K562 (cell line): ENCODE measurements at regions of chr3 and their contacts with region 1.

Region 1: DNA sequence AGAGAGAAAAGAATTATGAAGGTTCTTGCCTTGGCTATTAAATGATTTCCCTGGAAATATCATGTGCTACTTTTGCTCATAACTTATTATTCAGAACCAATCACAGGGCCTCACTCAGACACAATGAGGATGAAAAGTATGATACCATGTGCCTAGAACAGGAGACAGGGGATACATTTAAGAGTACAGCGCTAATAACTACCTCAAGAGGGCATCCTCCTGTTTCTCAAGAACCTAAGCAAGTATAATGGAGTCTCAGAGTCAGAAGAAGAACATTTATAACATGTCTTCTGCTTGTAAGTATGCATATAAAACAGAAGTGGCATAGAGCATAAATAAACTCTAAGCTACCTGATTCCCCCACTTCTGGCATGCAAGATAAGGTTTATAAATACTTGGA is 125.4 kb upstream of the MME start:
- DNase-seq: peak; percentile 17 to 48 (median 30)
- ATAC-seq: peak; percentile 91
- H3K4me3 ChIP-seq: no peak overlapping the region
- H3K27ac ChIP-seq: no peak overlapping the region
- H3K4me1 ChIP-seq: no peaks in the 10 kb centered on the region
- H3K27me3 ChIP-seq: no peaks in the 10 kb centered on the region
- CTCF ChIP-seq: peak; percentile 39 to 58 (median 45); a peak in 4 of 6 replicates
- EP300 ChIP-seq: no peak
- POLR2A ChIP-seq: no peak
- RAD21 ChIP-seq: peak; percentile 61 to 81

Region 2: DNA sequence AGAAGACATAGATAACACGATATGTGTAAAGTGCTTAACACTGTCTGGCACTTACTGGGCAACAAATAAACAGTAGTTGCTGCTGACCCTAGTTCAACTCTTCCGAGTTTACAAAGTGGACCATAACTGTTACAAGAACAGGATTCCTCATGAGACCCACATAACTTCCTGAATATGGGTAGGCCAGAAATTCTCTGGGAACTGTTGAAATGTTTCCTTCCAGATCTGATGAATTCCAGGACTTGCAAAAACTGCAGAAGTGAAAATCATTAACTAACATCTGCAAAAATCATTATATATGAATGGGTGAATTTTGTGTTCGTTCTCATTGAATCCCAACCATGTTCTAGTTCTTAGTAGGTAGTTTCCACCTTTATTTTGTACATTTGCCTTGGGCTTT is 56.3 kb before region 1 on chr3:
- CTCF ChIA-PET with region 1: no interaction called
- POLR2A ChIA-PET with region 1: no interaction called
- in situ Hi-C with region 1: no loop called
- intact Hi-C with region 1: no loop called
- DNase-seq: no peak
- ATAC-seq: no peak
- H3K4me3 ChIP-seq: no peak overlapping the region
- H3K27ac ChIP-seq: no peak overlapping the region
- H3K4me1 ChIP-seq: no peaks in the 10 kb centered on the region
- H3K27me3 ChIP-seq: no peaks in the 10 kb centered on the region
- CTCF ChIP-seq: no peak
- EP300 ChIP-seq: no peak
- POLR2A ChIP-seq: no peak
- RAD21 ChIP-seq: no peak

Region 3: GRCh38 chr3:154986727-154987126 is 32.0 kb after region 1 on chr3:
- CTCF ChIA-PET with region 1: no interaction called
- POLR2A ChIA-PET with region 1: no interaction called
- in situ Hi-C with region 1: no loop called
- intact Hi-C with region 1: no loop called
- DNase-seq: no peak
- ATAC-seq: no peak
- H3K4me3 ChIP-seq: no peak overlapping the region
- H3K27ac ChIP-seq: no peak overlapping the region
- H3K4me1 ChIP-seq: no peaks in the 10 kb centered on the region
- H3K27me3 ChIP-seq: no peaks in the 10 kb centered on the region
- CTCF ChIP-seq: no peak
- EP300 ChIP-seq: no peak
- POLR2A ChIP-seq: no peak
- RAD21 ChIP-seq: no peak

Region 4: DNA sequence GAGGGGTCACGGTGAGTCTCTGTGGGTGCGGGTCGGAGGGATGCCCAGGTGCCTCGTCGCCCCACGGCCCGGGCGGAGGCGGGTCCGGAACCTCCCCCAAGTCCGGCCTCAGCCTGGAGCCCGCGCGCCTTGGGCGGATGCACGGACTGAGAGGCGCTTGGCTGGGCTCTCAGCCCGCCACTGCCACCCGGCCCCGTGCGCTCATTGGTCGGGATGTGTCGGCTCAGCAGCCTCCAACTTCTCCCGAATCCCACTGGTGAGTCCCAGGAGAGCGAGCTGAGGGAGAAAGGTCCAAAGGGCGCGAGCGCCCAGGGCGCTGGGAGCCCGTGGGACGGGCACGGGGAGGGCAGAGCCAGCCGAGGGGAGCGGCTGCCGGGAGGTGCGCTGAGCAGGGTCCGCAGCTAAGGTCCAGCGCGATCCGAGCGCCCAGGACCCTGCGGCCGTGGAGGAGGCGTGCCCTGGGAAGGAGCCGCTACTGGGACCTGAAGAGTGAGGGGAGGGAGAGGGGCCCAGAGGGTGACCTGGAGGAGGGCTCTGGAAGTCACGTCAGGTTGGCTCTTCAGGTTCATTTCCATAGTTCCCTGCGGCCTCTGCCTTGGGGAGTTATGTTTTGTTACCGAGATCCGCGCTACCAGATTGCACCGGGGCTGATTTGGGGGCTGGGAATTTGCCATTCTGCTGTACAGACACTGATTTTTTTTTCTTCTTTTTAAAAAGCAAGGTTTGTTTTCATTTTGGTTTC is 125.2 kb after region 1 on chr3 and contains the start of gene MME:
- CTCF ChIA-PET with region 1: no interaction called
- POLR2A ChIA-PET with region 1: no interaction called
- in situ Hi-C with region 1: no loop called
- intact Hi-C with region 1: loop called (anchors 5 kb)
- DNase-seq: peak; percentile 15 to 23 (median 20)
- ATAC-seq: peak; percentile 81
- H3K4me3 ChIP-seq: peak within 1 kb of the TSS; percentile 58
- H3K27ac ChIP-seq: no peak within 1 kb of the TSS
- H3K4me1 ChIP-seq: peaks cover 9 to 14% of the 10 kb centered on the region in 2 experiments; a peak in 3 of 5 replicates
- H3K27me3 ChIP-seq: peaks cover 0 to 14% of the 10 kb centered on the region in 2 experiments; a peak in 2 of 5 replicates
- CTCF ChIP-seq: no peak
- EP300 ChIP-seq: no peak
- POLR2A ChIP-seq: no peak
- RAD21 ChIP-seq: no peak
- polyA plus RNA-seq, gene MME: 0.80 to 0.94 TPM

Region 5: GRCh38 chr3:155154255-155154654 is 199.5 kb after region 1 on chr3:
- CTCF ChIA-PET with region 1: no interaction called
- POLR2A ChIA-PET with region 1: no interaction called
- in situ Hi-C with region 1: no loop called
- intact Hi-C with region 1: no loop called
- DNase-seq: no peak
- ATAC-seq: no peak
- H3K4me3 ChIP-seq: no peak overlapping the region
- H3K27ac ChIP-seq: no peak overlapping the region
- H3K4me1 ChIP-seq: peaks cover 0 to 3% of the 10 kb centered on the region in 2 experiments; a peak in 2 of 5 replicates
- H3K27me3 ChIP-seq: no peaks in the 10 kb centered on the region
- CTCF ChIP-seq: no peak
- EP300 ChIP-seq: no peak
- POLR2A ChIP-seq: no peak
- RAD21 ChIP-seq: no peak

Region 6: GRCh38 chr3:155178810-155179436 is 224.2 kb after region 1 on chr3:
- CTCF ChIA-PET with region 1: no interaction called
- POLR2A ChIA-PET with region 1: no interaction called
- in situ Hi-C with region 1: no loop called
- intact Hi-C with region 1: loop called (anchors 10 kb)
- DNase-seq: no peak
- ATAC-seq: peak; percentile 50
- H3K4me3 ChIP-seq: no peak overlapping the region
- H3K27ac ChIP-seq: no peak overlapping the region
- H3K4me1 ChIP-seq: peaks cover 4 to 18% of the 10 kb centered on the region in 2 experiments; a peak in 2 of 5 replicates
- H3K27me3 ChIP-seq: no peaks in the 10 kb centered on the region
- CTCF ChIP-seq: no peak
- EP300 ChIP-seq: no peak
- POLR2A ChIP-seq: no peak
- RAD21 ChIP-seq: peak in 1 of 2 experiments; percentile 29; a peak in 1 of 4 replicates